ENCODE measurements at regions of chr3 and their contacts with region 1.

Region 1: DNA sequence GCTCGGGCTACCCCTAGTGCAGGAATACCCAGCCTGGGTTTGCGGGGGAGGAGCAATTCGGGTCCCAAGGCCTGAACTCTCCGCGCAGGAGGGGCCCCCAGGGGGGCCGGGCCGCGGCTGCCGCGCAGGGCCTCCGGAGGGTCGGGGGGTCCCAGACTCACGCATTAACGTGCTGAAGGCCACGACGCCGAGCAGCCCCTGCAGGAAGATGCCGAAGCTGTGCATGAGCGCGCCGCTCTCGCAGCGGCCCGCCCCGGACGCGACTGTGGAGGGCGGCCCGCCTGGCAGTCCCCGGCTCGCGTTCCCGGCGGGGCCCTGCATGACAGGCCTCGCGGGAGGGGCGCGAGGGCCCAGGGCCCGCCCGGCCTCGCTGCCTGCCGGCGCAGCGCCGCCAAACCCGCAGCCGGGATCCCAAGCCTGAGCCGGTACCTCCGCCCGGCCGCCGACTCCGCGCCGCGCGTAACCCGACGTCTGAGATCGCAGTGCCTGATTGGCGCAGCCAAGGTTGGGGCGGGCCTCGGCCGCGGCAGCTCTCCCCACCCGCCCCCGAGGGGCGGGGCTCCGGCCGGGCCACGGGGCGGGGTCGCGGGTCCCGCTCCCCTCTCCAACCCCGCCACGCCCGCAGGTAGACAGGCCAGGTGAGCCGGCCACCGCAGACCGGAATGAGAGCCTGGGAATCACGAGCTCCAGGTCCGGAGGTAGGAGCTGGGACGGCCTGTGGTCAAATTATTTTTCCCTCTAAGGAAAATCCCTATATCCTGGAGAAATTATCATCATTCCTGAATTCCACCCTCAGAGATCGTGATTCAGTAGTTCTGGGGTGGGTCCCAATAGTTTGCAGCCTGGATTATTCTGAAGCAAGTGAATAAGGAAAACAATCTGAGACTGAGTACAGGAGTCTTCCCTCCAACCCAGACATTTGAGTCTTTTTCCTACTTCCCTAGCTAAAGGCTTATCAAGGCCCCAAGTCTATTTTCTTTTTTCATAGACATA is at the start of gene STIMATE:
- DNase-seq: peak; percentile 89
- H3K4me3 Mint-ChIP-seq: peak within 1 kb of the TSS; percentile 89
- H3K27ac Mint-ChIP-seq: peak within 1 kb of the TSS; percentile 61
- H3K4me1 Mint-ChIP-seq: peaks cover 49% of the 10 kb centered on the region
- H3K27me3 Mint-ChIP-seq: no peaks in the 10 kb centered on the region
- total RNA-seq, gene STIMATE: 13.0 to 18.3 TPM

Region 2: GRCh38 chr3:52536369-52537164 is 360.9 kb before region 1 on chr3 and contains the start of gene UQCC5:
- CTCF ChIA-PET with region 1: no interaction called
- POLR2A ChIA-PET with region 1: no interaction called
- intact Hi-C with region 1: loop called (anchors 10 kb)
- DNase-seq: peak; percentile 99
- H3K4me3 Mint-ChIP-seq: peak within 1 kb of the TSS; percentile 92
- H3K27ac Mint-ChIP-seq: peak within 1 kb of the TSS; percentile 92
- H3K4me1 Mint-ChIP-seq: peaks cover 41% of the 10 kb centered on the region
- H3K27me3 Mint-ChIP-seq: no peaks in the 10 kb centered on the region
- total RNA-seq, gene UQCC5: 12.9 to 13.3 TPM

Region 3: GRCh38 chr3:52873433-52874159 is 23.8 kb before region 1 on chr3:
- CTCF ChIA-PET with region 1: interaction called, 46 read pairs
- POLR2A ChIA-PET with region 1: no interaction called
- intact Hi-C with region 1: no loop called
- DNase-seq: no peak
- H3K4me3 Mint-ChIP-seq: no peak overlapping the region
- H3K27ac Mint-ChIP-seq: peak overlapping the region; percentile 18
- H3K4me1 Mint-ChIP-seq: peaks cover 31% of the 10 kb centered on the region
- H3K27me3 Mint-ChIP-seq: no peaks in the 10 kb centered on the region

Region 4: GRCh38 chr3:52934630-52935530 is 37.5 kb after region 1 on chr3:
- CTCF ChIA-PET with region 1: interaction called, 7 read pairs
- POLR2A ChIA-PET with region 1: no interaction called
- intact Hi-C with region 1: loop called (anchors 2 kb)
- DNase-seq: peak; percentile 73
- H3K4me3 Mint-ChIP-seq: no peak overlapping the region
- H3K27ac Mint-ChIP-seq: no peak overlapping the region
- H3K4me1 Mint-ChIP-seq: peaks cover 10% of the 10 kb centered on the region
- H3K27me3 Mint-ChIP-seq: no peaks in the 10 kb centered on the region

Region 5: GRCh38 chr3:53045518-53046170 is 148.2 kb after region 1 on chr3 and contains the start of gene SFMBT1:
- CTCF ChIA-PET with region 1: no interaction called
- POLR2A ChIA-PET with region 1: interaction called, 11 read pairs
- intact Hi-C with region 1: loop called (anchors 2 kb)
- DNase-seq: peak; percentile 83
- H3K4me3 Mint-ChIP-seq: peak within 1 kb of the TSS; percentile 96
- H3K27ac Mint-ChIP-seq: peak within 1 kb of the TSS; percentile 97
- H3K4me1 Mint-ChIP-seq: peaks cover 44% of the 10 kb centered on the region
- H3K27me3 Mint-ChIP-seq: peaks cover 2% of the 10 kb centered on the region
- total RNA-seq, gene SFMBT1: 22.1 to 22.8 TPM